H1 (cell line): ENCODE measurements at regions of chr2 and their contacts with region 1.

Region 1: GRCh38 chr2:222797261-222797660 is 63.6 kb upstream of the ACSL3 start:
- DNase-seq: no peak
- H3K4me3 ChIP-seq: no peak overlapping the region
- H3K27ac ChIP-seq: no peak overlapping the region
- H3K4me1 ChIP-seq: peaks cover 0 to 13% (median 1%) of the 10 kb centered on the region in 4 experiments; a peak in 3 of 7 replicates
- H3K27me3 ChIP-seq: no peaks in the 10 kb centered on the region
- CTCF ChIP-seq: peak in 2 of 3 experiments; percentile 22 to 53; a peak in 2 of 4 replicates
- EP300 ChIP-seq: no peak
- POLR2A ChIP-seq: no peak
- RAD21 ChIP-seq: peak; percentile 40 to 41

Region 2: DNA sequence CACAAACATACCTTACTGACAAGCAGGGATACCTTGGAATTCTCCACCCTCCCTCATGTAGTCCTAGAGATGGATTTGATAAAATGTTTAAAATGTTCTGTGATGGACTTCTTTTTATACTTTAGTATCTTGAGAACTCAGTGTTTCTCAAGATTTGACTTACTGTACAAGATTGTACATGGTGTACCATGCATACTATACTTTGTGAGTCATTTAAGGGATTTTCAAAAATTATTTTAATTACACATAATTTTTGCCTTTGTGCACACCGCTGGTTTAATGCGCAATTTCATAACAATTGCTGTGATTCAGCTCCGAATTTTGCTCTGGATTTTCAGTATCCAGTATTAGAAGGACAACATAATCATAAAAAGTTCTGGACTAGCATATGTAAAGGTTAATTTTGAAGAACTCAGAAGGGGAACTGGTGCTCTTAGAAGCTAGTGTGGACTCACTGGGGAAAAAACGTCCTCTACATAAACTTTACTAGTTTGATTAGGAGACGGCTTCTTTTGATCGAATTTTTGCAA is 15.0 kb before region 1 on chr2:
- CTCF ChIA-PET with region 1: interaction called, 18 read pairs
- POLR2A ChIA-PET with region 1: no interaction called
- DNase-seq: no peak
- H3K4me3 ChIP-seq: no peak overlapping the region
- H3K27ac ChIP-seq: no peak overlapping the region
- H3K4me1 ChIP-seq: no peaks in the 10 kb centered on the region
- H3K27me3 ChIP-seq: no peaks in the 10 kb centered on the region
- CTCF ChIP-seq: no peak
- EP300 ChIP-seq: no peak
- POLR2A ChIP-seq: no peak
- RAD21 ChIP-seq: no peak

Region 3: GRCh38 chr2:222813177-222813843 is 16.0 kb after region 1 on chr2:
- CTCF ChIA-PET with region 1: interaction called, 27 read pairs
- POLR2A ChIA-PET with region 1: no interaction called
- DNase-seq: no peak
- H3K4me3 ChIP-seq: no peak overlapping the region
- H3K27ac ChIP-seq: no peak overlapping the region
- H3K4me1 ChIP-seq: no peaks in the 10 kb centered on the region
- H3K27me3 ChIP-seq: no peaks in the 10 kb centered on the region
- CTCF ChIP-seq: no peak
- EP300 ChIP-seq: no peak
- POLR2A ChIP-seq: no peak
- RAD21 ChIP-seq: no peak